Naive thymus-derived CD4-positive, alpha-beta T cell (primary cell): ENCODE measurements at regions of chr5 and their contacts with region 1.

Region 1: DNA sequence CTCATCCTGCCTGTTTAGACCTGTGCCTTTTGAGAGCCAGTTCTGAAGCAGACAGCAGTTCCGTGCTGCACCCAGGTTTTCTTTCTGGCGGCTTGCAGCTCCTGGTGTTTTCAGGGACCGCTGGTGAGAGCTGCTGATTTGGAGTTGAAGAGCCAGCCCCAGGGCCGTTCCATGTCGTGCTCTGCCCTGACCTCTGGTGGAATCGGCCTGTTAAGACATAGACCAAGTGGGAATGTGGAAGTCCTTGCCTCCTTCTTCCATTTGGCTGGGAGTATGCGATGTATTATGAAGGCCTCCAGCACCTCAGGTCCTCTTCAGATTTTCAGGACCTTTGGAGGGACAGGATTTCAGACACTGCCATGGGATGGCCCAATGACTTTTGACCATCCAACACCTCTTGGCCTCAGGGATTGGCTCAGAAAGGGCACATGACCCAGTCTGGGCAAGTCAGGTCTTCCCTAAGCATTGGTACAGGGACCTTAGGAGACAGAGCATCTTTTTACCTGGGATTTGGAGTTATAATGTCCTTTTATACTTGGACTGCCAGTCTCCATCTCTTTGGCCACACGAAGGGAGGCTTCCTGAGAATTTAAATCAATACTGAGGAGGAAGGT is 136.1 kb upstream of the CLINT1 start:
- DNase-seq: peak; percentile 5 to 52 (median 31)
- ATAC-seq: peak; percentile 84
- H3K4me3 ChIP-seq: no peak overlapping the region
- H3K4me3 Mint-ChIP-seq: peak overlapping the region in 9 of 10 donors; percentile 29 to 77 (median 61)
- H3K27ac ChIP-seq: no peak overlapping the region
- H3K27ac Mint-ChIP-seq: no peak overlapping the region
- H3K4me1 ChIP-seq: peaks cover 14 to 16% of the 10 kb centered on the region in 2 donors
- H3K4me1 Mint-ChIP-seq: peaks cover 8 to 20% (median 12%) of the 10 kb centered on the region in 7 donors
- H3K27me3 ChIP-seq: peaks cover 0 to 3% of the 10 kb centered on the region in 2 donors
- H3K27me3 Mint-ChIP-seq: peaks cover 13 to 56% (median 20%) of the 10 kb centered on the region in 5 donors

Region 2: GRCh38 chr5:157370967-157371366 is 624.0 kb before region 1 on chr5:
- CTCF ChIA-PET with region 1: no interaction called
- POLR2A ChIA-PET with region 1: no interaction called
- intact Hi-C with region 1: no loop called
- DNase-seq: no peak
- ATAC-seq: no peak
- H3K4me3 ChIP-seq: no peak overlapping the region
- H3K4me3 Mint-ChIP-seq: no peak overlapping the region
- H3K27ac ChIP-seq: no peak overlapping the region
- H3K27ac Mint-ChIP-seq: peak overlapping the region in 8 of 9 donors; percentile 8 to 82 (median 70)
- H3K4me1 ChIP-seq: no peaks in the 10 kb centered on the region
- H3K4me1 Mint-ChIP-seq: peaks cover 0 to 18% (median 5%) of the 10 kb centered on the region in 7 donors
- H3K27me3 ChIP-seq: no peaks in the 10 kb centered on the region
- H3K27me3 Mint-ChIP-seq: no peaks in the 10 kb centered on the region

Region 3: GRCh38 chr5:157665467-157666100 is 329.4 kb before region 1 on chr5:
- CTCF ChIA-PET with region 1: no interaction called
- POLR2A ChIA-PET with region 1: no interaction called
- intact Hi-C with region 1: loop called in 1 of 2 experiments (anchors 5 kb)
- DNase-seq: no peak
- ATAC-seq: peak; percentile 58
- H3K4me3 ChIP-seq: no peak overlapping the region
- H3K4me3 Mint-ChIP-seq: no peak overlapping the region
- H3K27ac ChIP-seq: no peak overlapping the region
- H3K27ac Mint-ChIP-seq: peak overlapping the region in 1 of 9 donors; percentile 21
- H3K4me1 ChIP-seq: no peaks in the 10 kb centered on the region
- H3K4me1 Mint-ChIP-seq: peaks cover 5 to 17% (median 9%) of the 10 kb centered on the region in 7 donors
- H3K27me3 ChIP-seq: peaks cover 0 to 5% of the 10 kb centered on the region in 2 donors
- H3K27me3 Mint-ChIP-seq: peaks cover 2 to 28% (median 23%) of the 10 kb centered on the region in 5 donors

Region 4: DNA sequence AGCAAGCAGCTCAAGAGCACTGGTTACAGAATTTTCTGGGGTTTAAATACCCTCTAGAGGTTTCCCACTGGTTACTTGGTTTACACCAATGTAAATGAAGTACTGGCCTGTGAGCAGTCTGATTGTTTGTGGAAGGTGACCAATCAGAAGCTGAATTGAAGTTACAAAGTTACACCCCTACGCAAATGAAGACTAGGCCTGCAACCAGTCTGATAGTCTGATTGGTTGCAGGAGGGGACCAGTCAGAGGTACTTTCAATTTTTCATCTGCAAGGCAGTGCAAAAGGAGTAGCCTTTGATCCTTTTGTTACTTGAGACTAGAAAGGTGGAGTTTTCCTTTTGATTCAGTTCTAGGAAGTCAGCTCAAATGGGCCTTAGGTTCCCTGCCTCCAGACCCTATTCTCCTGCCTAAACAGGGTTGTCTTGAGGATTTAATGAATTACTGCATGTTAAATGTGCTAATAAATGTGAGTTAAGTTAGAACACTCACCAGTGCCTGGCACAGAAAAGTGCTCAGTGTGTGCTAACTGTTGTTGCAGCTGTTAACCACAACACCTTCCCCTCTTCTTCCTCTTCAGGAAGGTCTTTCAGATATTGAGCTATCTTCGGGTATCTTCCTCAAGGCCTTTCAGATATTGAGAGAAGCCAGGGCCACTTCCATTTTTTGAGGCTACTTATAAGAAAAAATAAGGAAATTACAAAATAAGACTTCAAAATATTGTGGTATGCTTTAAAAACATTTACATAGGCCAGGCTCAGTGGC is 104.0 kb before region 1 on chr5:
- CTCF ChIA-PET with region 1: no interaction called
- POLR2A ChIA-PET with region 1: no interaction called
- intact Hi-C with region 1: no loop called
- DNase-seq: peak in 5 of 9 donors; percentile 4 to 23 (median 19)
- ATAC-seq: peak; percentile 65
- H3K4me3 ChIP-seq: no peak overlapping the region
- H3K4me3 Mint-ChIP-seq: peak overlapping the region in 5 of 10 donors; percentile 12 to 40 (median 39)
- H3K27ac ChIP-seq: no peak overlapping the region
- H3K27ac Mint-ChIP-seq: peak overlapping the region in 8 of 9 donors; percentile 31 to 81 (median 76)
- H3K4me1 ChIP-seq: no peaks in the 10 kb centered on the region
- H3K4me1 Mint-ChIP-seq: peaks cover 0 to 23% (median 17%) of the 10 kb centered on the region in 7 donors
- H3K27me3 ChIP-seq: no peaks in the 10 kb centered on the region
- H3K27me3 Mint-ChIP-seq: no peaks in the 10 kb centered on the region

Region 5: GRCh38 chr5:157956271-157956885 is 38.6 kb before region 1 on chr5:
- CTCF ChIA-PET with region 1: no interaction called
- POLR2A ChIA-PET with region 1: no interaction called
- intact Hi-C with region 1: no loop called
- DNase-seq: no peak
- ATAC-seq: peak; percentile 27
- H3K4me3 ChIP-seq: no peak overlapping the region
- H3K4me3 Mint-ChIP-seq: no peak overlapping the region
- H3K27ac ChIP-seq: no peak overlapping the region
- H3K27ac Mint-ChIP-seq: no peak overlapping the region
- H3K4me1 ChIP-seq: no peaks in the 10 kb centered on the region
- H3K4me1 Mint-ChIP-seq: peaks cover 0 to 3% (median 0%) of the 10 kb centered on the region in 7 donors
- H3K27me3 ChIP-seq: no peaks in the 10 kb centered on the region
- H3K27me3 Mint-ChIP-seq: peaks cover 4 to 33% (median 8%) of the 10 kb centered on the region in 5 donors